Heart right ventricle (tissue), 16 donors: ENCODE measurements at regions of chr4 and their contacts with region 1.

Region 1: GRCh38 chr4:128528793-128529553 is 241.4 kb upstream of the PGRMC2 start:
- DNase-seq: peak in 1 of 2 donors; percentile 39
- ATAC-seq: peak; percentile 80 to 99 (median 90)
- H3K4me3 ChIP-seq: no peak overlapping the region
- H3K27ac ChIP-seq: peak overlapping the region in 9 of 10 donors; percentile 4 to 89 (median 62)
- H3K4me1 ChIP-seq: peaks cover 4 to 48% (median 26%) of the 10 kb centered on the region in 9 donors
- H3K27me3 ChIP-seq: no peaks in the 10 kb centered on the region
- CTCF ChIP-seq: no peak

Region 2: GRCh38 chr4:127917151-127917550 is 611.8 kb before region 1 on chr4:
- intact Hi-C with region 1: no loop called
- DNase-seq: no peak
- ATAC-seq: peak in 6 of 8 donors; percentile 71 to 79 (median 76)
- H3K4me3 ChIP-seq: no peak overlapping the region
- H3K27ac ChIP-seq: peak overlapping the region in 1 of 10 donors; percentile 32
- H3K4me1 ChIP-seq: peaks cover 0 to 11% (median 0%) of the 10 kb centered on the region in 9 donors
- H3K27me3 ChIP-seq: no peaks in the 10 kb centered on the region
- CTCF ChIP-seq: no peak

Region 3: DNA sequence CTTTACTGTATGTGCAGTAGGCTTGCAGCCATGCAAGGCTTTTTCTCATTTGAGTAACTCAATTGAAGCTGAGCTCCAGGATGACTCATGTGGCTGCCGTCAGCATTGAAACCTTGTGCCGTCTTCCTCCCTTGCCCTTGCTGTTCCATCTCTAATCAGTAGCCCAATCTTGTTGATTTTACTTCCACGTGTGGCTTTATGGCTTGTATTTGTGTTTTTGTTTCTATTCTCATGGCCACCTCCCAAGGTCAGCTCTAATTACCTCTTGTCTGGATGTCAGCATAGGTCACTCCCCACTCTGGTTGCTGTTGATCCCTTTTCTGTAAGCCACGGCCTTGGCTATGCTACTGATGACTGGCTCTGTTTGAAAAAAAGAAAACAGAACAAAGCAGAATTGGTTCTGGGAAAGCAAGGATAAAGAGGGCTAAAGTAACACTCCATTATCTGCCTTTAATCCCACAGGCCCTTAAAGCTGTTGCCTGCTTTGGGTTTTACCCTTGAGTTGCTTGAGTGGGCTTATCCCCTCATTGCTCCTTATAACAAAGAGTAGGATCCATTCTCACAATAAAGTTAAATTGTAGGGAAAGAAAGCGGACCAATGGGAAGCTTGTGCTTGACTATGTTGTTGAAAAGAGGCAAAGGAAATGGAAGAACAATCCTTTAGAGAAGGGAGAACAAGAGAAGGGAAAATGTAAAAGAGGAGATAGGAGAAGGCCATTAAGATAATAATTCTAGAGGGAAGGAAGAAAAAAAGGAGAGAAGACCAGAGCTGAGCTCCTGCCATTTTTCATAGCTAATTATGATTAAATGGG is 67.5 kb before region 1 on chr4:
- intact Hi-C with region 1: loop called in 2 of 10 experiments (anchors 5 to 10 kb)
- DNase-seq: no peak
- ATAC-seq: peak in 7 of 8 donors; percentile 35 to 76 (median 47)
- H3K4me3 ChIP-seq: no peak overlapping the region
- H3K27ac ChIP-seq: peak overlapping the region in 1 of 10 donors; percentile 59
- H3K4me1 ChIP-seq: peaks cover 0 to 20% (median 0%) of the 10 kb centered on the region in 9 donors
- H3K27me3 ChIP-seq: no peaks in the 10 kb centered on the region
- CTCF ChIP-seq: no peak